Left cardiac atrium (tissue), 4 donors: ENCODE measurements at regions of chr13 and their contacts with region 1.

Region 1: GRCh38 chr13:27665333-27665732 is 43.6 kb downstream of the POLR1D start:
- DNase-seq: no peak
- ATAC-seq: no peak

Region 2: DNA sequence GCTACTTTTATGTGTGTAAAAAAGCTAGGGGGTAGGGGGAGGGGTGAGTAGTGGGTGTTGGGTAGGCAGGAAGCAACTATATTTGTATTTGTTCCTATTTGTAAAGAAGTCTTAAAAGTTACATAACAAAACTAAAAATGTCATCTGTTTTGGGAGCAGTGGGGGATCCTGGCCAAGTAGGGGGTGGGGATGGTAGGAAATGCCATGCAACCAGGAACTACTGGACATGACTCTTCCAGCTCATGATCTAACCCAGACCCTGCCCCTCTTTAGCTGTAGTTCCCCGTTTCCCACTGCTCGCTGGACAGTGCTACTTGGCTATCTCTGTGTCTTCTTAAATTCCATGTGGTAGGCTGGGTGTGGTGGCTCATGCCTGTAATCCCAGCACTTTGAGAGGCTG is 237.7 kb before region 1 on chr13:
- intact Hi-C with region 1: no loop called
- DNase-seq: peak; percentile 38
- ATAC-seq: no peak

Region 3: DNA sequence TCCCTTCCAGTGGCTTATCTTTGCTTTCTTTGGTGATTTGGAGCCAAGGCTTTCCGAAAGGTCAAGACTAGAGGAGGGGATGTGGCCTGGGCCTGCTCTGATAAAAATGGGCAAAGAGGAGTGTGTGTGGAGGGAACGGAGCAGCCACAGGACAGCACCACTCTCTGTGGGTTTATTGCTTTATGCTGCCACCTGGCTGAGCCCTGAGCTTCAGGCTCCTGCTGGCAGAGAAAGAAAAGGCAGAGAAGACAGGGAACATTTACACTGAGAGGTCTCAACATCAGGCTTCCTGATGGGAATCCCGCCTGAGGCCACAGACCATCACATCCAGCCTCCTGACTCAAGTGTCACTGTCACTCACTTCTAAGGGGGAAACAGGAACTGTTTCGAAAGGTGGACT is 117.8 kb after region 1 on chr13:
- intact Hi-C with region 1: loop called in 1 of 2 experiments (anchors 5 kb)
- DNase-seq: no peak
- ATAC-seq: peak in 1 of 2 donors; percentile 50